ENCODE measurements at regions of chr3 and their contacts with region 1.

Region 1: GRCh38 chr3:195197765-195198425 is 73.1 kb downstream of the XXYLT1 start:
- DNase-seq: peak; percentile 12
- H3K4me3 ChIP-seq: no peak overlapping the region
- H3K27ac ChIP-seq: no peak overlapping the region
- H3K4me1 ChIP-seq: peaks cover 0 to 27% (median 21%) of the 10 kb centered on the region in 4 donors
- H3K27me3 ChIP-seq: no peaks in the 10 kb centered on the region
- CTCF ChIP-seq: no peak
- EP300 ChIP-seq: no peak
- POLR2A ChIP-seq: no peak

Region 2: GRCh38 chr3:194706431-194707146 is 491.3 kb before region 1 on chr3:
- intact Hi-C with region 1: no loop called
- DNase-seq: no peak
- H3K4me3 ChIP-seq: no peak overlapping the region
- H3K27ac ChIP-seq: no peak overlapping the region
- H3K4me1 ChIP-seq: no peaks in the 10 kb centered on the region
- H3K27me3 ChIP-seq: no peaks in the 10 kb centered on the region
- CTCF ChIP-seq: no peak
- EP300 ChIP-seq: no peak
- POLR2A ChIP-seq: no peak

Region 3: GRCh38 chr3:195250473-195251251 is 52.8 kb after region 1 on chr3:
- intact Hi-C with region 1: loop called (anchors 5 kb)
- DNase-seq: peak; percentile 83
- H3K4me3 ChIP-seq: no peak overlapping the region
- H3K27ac ChIP-seq: peak overlapping the region in 3 of 4 donors; percentile 54 to 97 (median 87)
- H3K4me1 ChIP-seq: peaks cover 0 to 44% (median 33%) of the 10 kb centered on the region in 4 donors
- H3K27me3 ChIP-seq: no peaks in the 10 kb centered on the region
- CTCF ChIP-seq: peak in 3 of 4 experiments; percentile 46 to 70 (median 47)
- EP300 ChIP-seq: no peak
- POLR2A ChIP-seq: no peak

Region 4: GRCh38 chr3:195542698-195543499 is 345.0 kb after region 1 on chr3 and contains the start of gene PPP1R2:
- intact Hi-C with region 1: no loop called
- DNase-seq: peak; percentile 96
- H3K4me3 ChIP-seq: peak within 1 kb of the TSS; percentile 68 to 98 (median 80)
- H3K27ac ChIP-seq: peak within 1 kb of the TSS; percentile 94 to 96 (median 95)
- H3K4me1 ChIP-seq: peaks cover 0 to 69% (median 56%) of the 10 kb centered on the region in 4 donors
- H3K27me3 ChIP-seq: no peaks in the 10 kb centered on the region
- CTCF ChIP-seq: no peak
- EP300 ChIP-seq: no peak
- POLR2A ChIP-seq: peak; percentile 92 to 94
- total RNA-seq, gene PPP1R2: 69.9 to 126 (median 88.0) TPM